ENCODE measurements at regions of chr22 and their contacts with region 1.

Region 1: GRCh38 chr22:40651563-40652501 is 15.3 kb upstream of the MRTFA start:
- DNase-seq: peak; percentile 71
- H3K4me3 Mint-ChIP-seq: peak overlapping the region; percentile 72
- H3K27ac Mint-ChIP-seq: peak overlapping the region; percentile 91
- H3K4me1 Mint-ChIP-seq: peaks cover 32% of the 10 kb centered on the region
- H3K27me3 Mint-ChIP-seq: no peaks in the 10 kb centered on the region

Region 2: GRCh38 chr22:40668611-40669411 is 17.0 kb after region 1 on chr22:
- intact Hi-C with region 1: loop called (anchors 2 kb)
- DNase-seq: no peak
- H3K4me3 Mint-ChIP-seq: peak overlapping the region; percentile 62
- H3K27ac Mint-ChIP-seq: peak overlapping the region; percentile 97
- H3K4me1 Mint-ChIP-seq: peaks cover 32% of the 10 kb centered on the region
- H3K27me3 Mint-ChIP-seq: no peaks in the 10 kb centered on the region

Region 3: DNA sequence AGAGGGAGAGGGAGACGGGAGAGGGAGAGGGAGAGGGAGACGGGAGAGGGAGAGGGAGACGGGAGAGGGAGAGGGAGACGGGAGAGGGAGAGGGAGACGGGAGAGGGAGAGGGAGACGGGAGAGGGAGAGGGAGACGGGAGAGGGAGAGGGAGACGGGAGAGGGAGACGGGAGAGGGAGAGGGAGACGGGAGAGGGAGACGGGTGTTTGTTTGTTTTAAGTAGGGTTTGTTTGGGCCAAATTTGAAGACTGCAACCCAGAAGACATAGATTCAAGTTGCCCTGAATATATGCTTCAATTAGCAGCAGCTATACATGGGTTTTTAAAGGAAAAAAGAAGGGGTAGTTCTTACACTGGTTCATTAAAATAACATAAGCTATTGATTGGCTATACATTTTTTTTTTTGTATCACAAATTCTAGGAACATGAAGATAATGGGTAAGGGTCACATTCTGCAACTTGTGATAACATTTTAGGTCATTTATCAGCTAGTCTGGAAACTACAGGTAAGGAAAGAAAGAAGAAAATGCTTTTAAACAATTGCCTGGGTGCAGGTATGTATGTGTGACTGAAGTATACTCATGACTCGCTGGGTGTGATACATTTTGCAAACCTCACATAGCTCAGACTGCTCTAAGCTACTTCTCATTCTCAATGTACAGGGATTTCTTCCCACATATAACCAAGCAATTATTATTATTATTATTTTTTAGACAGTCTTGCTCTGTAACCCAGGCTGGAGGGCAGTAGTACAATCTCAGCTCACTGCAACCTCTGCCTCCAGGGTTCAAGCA is 94.8 kb after region 1 on chr22:
- intact Hi-C with region 1: no loop called
- DNase-seq: no peak
- H3K4me3 Mint-ChIP-seq: no peak overlapping the region
- H3K27ac Mint-ChIP-seq: no peak overlapping the region
- H3K4me1 Mint-ChIP-seq: no peaks in the 10 kb centered on the region
- H3K27me3 Mint-ChIP-seq: peaks cover 6% of the 10 kb centered on the region

Measured in activated T-helper 1 cell treated with anti-CD3 and anti-CD28 coated beads, Interleukin-12 subunit alpha, Interleukin-12 subunit beta, Interleukin-2, Interleukin-4 antibody, amounts not matched to agents 30 ng/mL and 10 ng/mL and 1 ng/mL, durations not matched to agents 14 hours and 24 hours and 36 hours (primary cell).